Activated CD4-positive, alpha-beta T cell treated with anti-CD3 and anti-CD28 coated beads for 36 hours (primary cell): ENCODE measurements at regions of chr11 and their contacts with region 1.

Region 1: DNA sequence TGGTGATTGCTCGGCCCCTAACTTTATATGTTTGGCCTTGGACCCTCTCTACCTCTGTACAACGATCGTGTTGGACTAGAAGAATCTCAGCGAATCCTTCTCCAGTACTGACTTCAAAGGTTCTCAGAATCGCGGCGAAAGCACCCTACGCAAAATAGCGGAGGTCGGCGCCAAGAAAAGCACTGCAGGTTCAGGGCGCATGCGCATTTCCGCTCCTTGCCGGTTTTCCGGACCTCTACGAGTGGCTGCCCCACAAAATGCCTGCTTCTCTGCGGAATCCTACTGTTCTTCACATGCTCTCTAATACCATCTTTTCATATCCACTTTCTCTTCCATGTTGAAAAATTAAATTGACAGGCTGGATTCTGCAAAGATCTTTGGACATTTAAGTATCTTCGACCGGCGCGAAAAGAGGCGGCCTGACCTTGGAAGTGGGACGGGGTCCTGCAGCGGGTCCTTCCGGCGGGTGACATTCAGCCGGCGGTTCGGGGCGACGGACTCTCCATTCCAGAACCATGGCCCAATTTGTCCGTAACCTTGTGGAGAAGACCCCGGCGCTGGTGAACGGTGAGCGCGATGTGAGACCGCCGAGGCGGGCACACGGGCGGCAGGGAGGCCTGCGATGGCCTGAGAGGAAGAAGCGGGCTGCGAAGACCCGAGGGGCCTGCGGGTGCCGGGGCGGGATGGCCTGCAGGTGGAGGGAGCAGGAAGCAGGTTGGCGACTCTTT is at the start of gene ATP5MG:
- DNase-seq: peak; percentile 96
- ATAC-seq: peak; percentile 63
- H3K4me3 Mint-ChIP-seq: peak within 1 kb of the TSS; percentile 93
- H3K27ac Mint-ChIP-seq: peak within 1 kb of the TSS; percentile 100
- H3K4me1 Mint-ChIP-seq: peaks cover 64% of the 10 kb centered on the region
- H3K27me3 Mint-ChIP-seq: no peaks in the 10 kb centered on the region
- total RNA-seq, gene ATP5MG: 136 to 229 TPM

Region 2: DNA sequence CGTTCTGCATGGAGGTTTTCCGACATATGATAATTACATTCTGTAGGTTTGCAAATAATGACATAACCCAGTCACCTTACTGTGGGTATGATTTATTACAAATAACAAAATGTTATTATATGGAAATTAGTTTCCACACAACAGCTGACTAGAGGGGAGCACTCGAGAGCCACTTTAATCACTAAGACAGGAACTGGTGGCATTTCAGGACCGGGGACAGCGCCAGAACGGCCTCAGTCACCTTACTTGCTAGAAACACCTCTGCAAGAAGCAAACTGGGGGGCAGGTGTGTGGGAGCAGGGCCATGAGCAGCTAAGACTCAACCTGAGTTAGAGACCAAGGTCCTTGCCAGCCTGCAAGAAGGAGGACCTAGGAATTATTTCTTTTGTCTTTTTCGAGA is 804.2 kb before region 1 on chr11:
- CTCF ChIA-PET with region 1: no interaction called
- POLR2A ChIA-PET with region 1: no interaction called
- intact Hi-C with region 1: no loop called
- DNase-seq: peak; percentile 75
- ATAC-seq: no peak
- H3K4me3 Mint-ChIP-seq: no peak overlapping the region
- H3K27ac Mint-ChIP-seq: no peak overlapping the region
- H3K4me1 Mint-ChIP-seq: no peaks in the 10 kb centered on the region
- H3K27me3 Mint-ChIP-seq: peaks cover 17% of the 10 kb centered on the region

Region 3: GRCh38 chr11:118251858-118252652 is 149.3 kb before region 1 on chr11 and contains the start of gene MPZL3:
- CTCF ChIA-PET with region 1: no interaction called
- POLR2A ChIA-PET with region 1: no interaction called
- intact Hi-C with region 1: loop called in 1 of 2 experiments (anchors 2 kb)
- DNase-seq: peak; percentile 90
- ATAC-seq: peak; percentile 65
- H3K4me3 Mint-ChIP-seq: peak within 1 kb of the TSS; percentile 82
- H3K27ac Mint-ChIP-seq: peak within 1 kb of the TSS; percentile 96
- H3K4me1 Mint-ChIP-seq: peaks cover 36% of the 10 kb centered on the region
- H3K27me3 Mint-ChIP-seq: no peaks in the 10 kb centered on the region
- total RNA-seq, gene MPZL3: 45.9 to 53.2 TPM

Region 4: DNA sequence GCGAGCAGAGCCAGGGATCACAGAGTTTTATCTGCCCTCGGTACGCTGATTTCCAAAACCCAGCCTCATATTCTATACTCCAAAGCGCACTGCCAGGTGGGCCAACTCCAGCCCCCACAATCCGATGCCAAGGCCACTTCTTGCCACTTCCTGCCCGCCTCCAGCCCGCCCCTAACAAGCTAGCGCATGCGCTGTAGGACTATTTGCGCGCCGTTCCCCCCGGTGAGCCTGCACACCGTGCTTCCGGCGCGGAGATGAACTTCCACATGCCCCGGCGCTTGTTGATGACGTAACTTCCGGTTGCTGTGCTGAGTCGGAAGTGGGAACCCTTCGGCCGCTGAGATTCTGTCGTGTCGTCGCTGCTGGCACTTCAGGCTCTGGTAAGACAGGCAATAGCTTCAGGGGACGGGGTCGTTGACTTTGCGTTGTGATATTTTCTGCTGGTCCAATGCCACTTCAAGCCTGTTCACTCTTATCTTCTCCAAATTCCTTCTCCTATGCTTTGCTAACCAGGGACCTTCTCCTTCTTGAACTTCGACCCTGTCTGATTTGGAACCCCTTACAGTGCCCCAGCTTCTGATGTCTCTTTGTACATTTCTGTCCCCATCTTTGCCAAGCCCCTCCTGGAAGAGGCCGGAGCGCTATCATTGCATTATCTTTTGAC is 41.9 kb before region 1 on chr11 and contains the start of gene UBE4A:
- CTCF ChIA-PET with region 1: interaction called, 5 read pairs
- POLR2A ChIA-PET with region 1: interaction called, 4 read pairs
- intact Hi-C with region 1: loop called in 1 of 2 experiments (anchors 1 kb)
- DNase-seq: peak; percentile 99
- ATAC-seq: peak; percentile 96
- H3K4me3 Mint-ChIP-seq: peak within 1 kb of the TSS; percentile 100
- H3K27ac Mint-ChIP-seq: peak within 1 kb of the TSS; percentile 97
- H3K4me1 Mint-ChIP-seq: peaks cover 43% of the 10 kb centered on the region
- H3K27me3 Mint-ChIP-seq: no peaks in the 10 kb centered on the region
- total RNA-seq, gene UBE4A: 44.2 to 50.7 TPM

Region 5: DNA sequence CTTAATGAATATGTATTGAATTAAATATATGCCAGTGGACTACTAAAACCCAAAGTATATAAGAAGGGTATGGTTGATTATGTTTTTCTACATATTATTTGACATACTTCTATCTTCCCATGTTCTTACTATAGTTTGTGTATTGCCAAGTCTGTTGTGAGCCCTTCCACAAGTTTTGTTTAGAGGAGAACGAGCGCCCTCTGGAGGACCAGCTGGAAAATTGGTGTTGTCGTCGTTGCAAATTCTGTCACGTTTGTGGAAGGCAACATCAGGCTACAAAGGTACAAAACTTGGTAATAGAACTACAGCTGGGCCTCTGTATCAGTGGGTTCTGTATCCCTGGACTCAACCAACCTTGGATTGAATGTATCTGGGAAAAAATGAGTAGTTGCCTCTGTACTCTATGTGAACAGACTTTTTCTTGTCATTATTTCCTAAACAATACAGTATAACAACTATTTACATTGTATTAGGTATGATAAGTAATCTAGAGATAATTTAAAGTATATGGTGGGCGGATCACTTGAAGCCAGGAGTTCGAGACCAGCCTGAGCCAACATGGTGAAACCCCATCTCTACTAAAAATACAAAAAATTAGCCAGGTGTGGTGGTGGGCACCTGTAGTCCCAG is 87.3 kb after region 1 on chr11:
- CTCF ChIA-PET with region 1: interaction called, 7 read pairs
- POLR2A ChIA-PET with region 1: no interaction called
- intact Hi-C with region 1: loop called (anchors 1 kb)
- DNase-seq: peak; percentile 90
- ATAC-seq: peak; percentile 71
- H3K4me3 Mint-ChIP-seq: no peak overlapping the region
- H3K27ac Mint-ChIP-seq: peak overlapping the region; percentile 10
- H3K4me1 Mint-ChIP-seq: peaks cover 5% of the 10 kb centered on the region
- H3K27me3 Mint-ChIP-seq: no peaks in the 10 kb centered on the region

Region 6: GRCh38 chr11:118572061-118572980 is 171.0 kb after region 1 on chr11 and contains the start of gene ARCN1:
- CTCF ChIA-PET with region 1: no interaction called
- POLR2A ChIA-PET with region 1: no interaction called
- intact Hi-C with region 1: loop called (anchors 2 to 5 kb)
- DNase-seq: peak; percentile 88
- ATAC-seq: peak; percentile 80
- H3K4me3 Mint-ChIP-seq: peak within 1 kb of the TSS; percentile 89
- H3K27ac Mint-ChIP-seq: peak within 1 kb of the TSS; percentile 96
- H3K4me1 Mint-ChIP-seq: peaks cover 44% of the 10 kb centered on the region
- H3K27me3 Mint-ChIP-seq: no peaks in the 10 kb centered on the region
- total RNA-seq, gene ARCN1: 148 to 154 TPM